ENCODE measurements at regions of chr19 and their contacts with region 1.

Region 1: GRCh38 chr19:53792721-53793433 is 31.2 kb downstream of the NLRP12 start:
- DNase-seq: peak; percentile 73 to 92
- ATAC-seq: peak; percentile 97 to 99
- H3K4me3 ChIP-seq: no peak overlapping the region
- H3K27ac ChIP-seq: no peak overlapping the region
- H3K4me1 ChIP-seq: no peaks in the 10 kb centered on the region
- CTCF ChIP-seq: peak; percentile 98
- EP300 ChIP-seq: no peak
- POLR2A ChIP-seq: no peak
- RAD21 ChIP-seq: peak; percentile 84 to 95

Region 2: GRCh38 chr19:53730390-53730789 is 62.5 kb before region 1 on chr19:
- CTCF ChIA-PET with region 1: no interaction called
- POLR2A ChIA-PET with region 1: no interaction called
- DNase-seq: no peak
- ATAC-seq: no peak
- H3K4me3 ChIP-seq: no peak overlapping the region
- H3K27ac ChIP-seq: no peak overlapping the region
- H3K4me1 ChIP-seq: no peaks in the 10 kb centered on the region
- CTCF ChIP-seq: no peak
- EP300 ChIP-seq: no peak
- POLR2A ChIP-seq: no peak
- RAD21 ChIP-seq: no peak

Region 3: GRCh38 chr19:53772943-53773342 is 19.9 kb before region 1 on chr19:
- CTCF ChIA-PET with region 1: interaction called, 23 read pairs
- POLR2A ChIA-PET with region 1: no interaction called
- DNase-seq: peak; percentile 38 to 79
- ATAC-seq: peak; percentile 77 to 85; a peak in 5 of 6 replicates
- H3K4me3 ChIP-seq: no peak overlapping the region
- H3K27ac ChIP-seq: no peak overlapping the region
- H3K4me1 ChIP-seq: no peaks in the 10 kb centered on the region
- CTCF ChIP-seq: peak; percentile 63
- EP300 ChIP-seq: no peak
- POLR2A ChIP-seq: no peak
- RAD21 ChIP-seq: peak; percentile 64 to 78

Region 4: GRCh38 chr19:53780506-53780905 is 12.4 kb before region 1 on chr19:
- CTCF ChIA-PET with region 1: interaction called, 23 read pairs
- POLR2A ChIA-PET with region 1: no interaction called
- DNase-seq: no peak
- ATAC-seq: no peak
- H3K4me3 ChIP-seq: no peak overlapping the region
- H3K27ac ChIP-seq: no peak overlapping the region
- H3K4me1 ChIP-seq: no peaks in the 10 kb centered on the region
- CTCF ChIP-seq: no peak
- EP300 ChIP-seq: no peak
- POLR2A ChIP-seq: no peak
- RAD21 ChIP-seq: no peak

Measured in A549 (cell line).